ENCODE measurements at regions of chr18 and their contacts with region 1.

Region 1: GRCh38 chr18:21099442-21099841 is 12.2 kb downstream of the ROCK1 start:
- DNase-seq: no peak
- ATAC-seq: peak; percentile 78
- H3K4me3 ChIP-seq: peak overlapping the region; percentile 52
- H3K27ac ChIP-seq: peak overlapping the region; percentile 42
- H3K4me1 ChIP-seq: peaks cover 6% of the 10 kb centered on the region
- H3K27me3 ChIP-seq: no peaks in the 10 kb centered on the region
- CTCF ChIP-seq: no peak
- EP300 ChIP-seq: no peak
- POLR2A ChIP-seq: no peak
- RAD21 ChIP-seq: no peak

Region 2: DNA sequence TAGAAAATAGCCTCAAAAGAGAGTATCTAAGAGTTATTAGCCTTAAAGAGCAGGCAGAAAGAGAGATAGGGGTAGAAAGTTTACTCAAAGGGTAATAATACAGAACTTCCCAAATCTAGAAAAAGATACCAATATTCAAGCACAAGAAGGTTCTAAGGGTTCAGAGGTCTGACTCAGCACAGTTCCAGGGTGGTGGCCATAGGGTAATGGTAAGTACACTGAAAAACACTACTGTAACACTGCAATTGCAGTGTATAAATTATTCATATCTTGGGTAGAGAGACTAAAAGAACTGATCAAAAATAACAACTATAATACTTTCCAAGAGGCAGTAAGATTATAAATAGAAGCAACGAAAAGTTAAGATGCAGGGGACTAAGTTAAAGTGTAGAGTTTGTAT is 103.0 kb before region 1 on chr18:
- CTCF ChIA-PET with region 1: no interaction called
- POLR2A ChIA-PET with region 1: no interaction called
- RAD21 ChIA-PET with region 1: no interaction called
- SMC1A ChIA-PET with region 1: no interaction called
- in situ Hi-C with region 1: loop called (anchors 10 kb)
- intact Hi-C with region 1: no loop called
- DNase-seq: no peak
- ATAC-seq: no peak
- H3K4me3 ChIP-seq: no peak overlapping the region
- H3K27ac ChIP-seq: no peak overlapping the region
- H3K4me1 ChIP-seq: no peaks in the 10 kb centered on the region
- H3K27me3 ChIP-seq: no peaks in the 10 kb centered on the region
- CTCF ChIP-seq: no peak
- EP300 ChIP-seq: no peak
- POLR2A ChIP-seq: no peak
- RAD21 ChIP-seq: no peak

Region 3: DNA sequence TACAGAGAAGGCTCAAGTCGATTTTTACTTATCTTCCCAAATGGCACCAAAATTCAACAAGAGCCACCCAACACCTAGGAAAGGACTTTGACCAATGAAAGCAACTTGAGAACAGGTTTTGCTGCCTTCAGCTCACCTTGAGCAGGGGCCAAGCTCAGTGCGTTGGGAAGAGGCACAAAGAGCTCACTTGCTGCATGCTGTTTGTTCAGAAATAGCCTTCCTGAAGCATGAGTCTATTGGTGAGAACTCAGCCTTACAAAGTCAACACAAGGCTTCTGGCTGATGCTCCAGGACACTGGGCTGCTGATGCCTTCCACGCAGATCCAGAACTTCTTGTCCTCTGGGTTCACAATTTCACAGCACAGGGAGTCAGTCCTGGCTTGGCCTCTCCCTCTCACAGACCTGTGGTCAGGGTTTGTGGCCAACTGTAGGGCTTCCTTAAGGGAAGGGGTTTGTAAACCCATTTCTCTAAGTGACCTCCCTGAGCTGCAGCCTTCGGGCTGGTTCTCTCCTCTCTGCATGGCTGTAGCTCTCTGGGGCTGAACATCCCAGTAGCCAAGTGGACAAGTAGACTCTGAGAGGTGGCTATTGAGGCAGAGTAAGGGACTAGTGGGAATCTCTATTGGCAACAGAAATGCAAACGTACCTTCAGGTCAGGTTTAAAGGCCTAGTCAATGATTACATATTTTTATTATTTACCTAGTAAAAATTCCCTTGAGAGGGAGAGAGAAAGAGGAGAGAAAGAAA is 945.2 kb after region 1 on chr18:
- CTCF ChIA-PET with region 1: no interaction called
- POLR2A ChIA-PET with region 1: no interaction called
- RAD21 ChIA-PET with region 1: no interaction called
- SMC1A ChIA-PET with region 1: no interaction called
- in situ Hi-C with region 1: no loop called
- intact Hi-C with region 1: no loop called
- DNase-seq: no peak
- ATAC-seq: no peak
- H3K4me3 ChIP-seq: no peak overlapping the region
- H3K27ac ChIP-seq: no peak overlapping the region
- H3K4me1 ChIP-seq: no peaks in the 10 kb centered on the region
- H3K27me3 ChIP-seq: no peaks in the 10 kb centered on the region; a peak in 2 of 4 replicates
- CTCF ChIP-seq: no peak
- EP300 ChIP-seq: no peak
- POLR2A ChIP-seq: no peak
- RAD21 ChIP-seq: no peak